ENCODE measurements at regions of chr12 and their contacts with region 1.

Region 1: GRCh38 chr12:52884526-52885293 is 20.2 kb downstream of the KRT8 start:
- DNase-seq: peak; percentile 86
- ATAC-seq: peak; percentile 76

Region 2: GRCh38 chr12:52949413-52950331 is 65.0 kb after region 1 on chr12:
- intact Hi-C with region 1: no loop called
- DNase-seq: no peak
- ATAC-seq: no peak

Region 3: DNA sequence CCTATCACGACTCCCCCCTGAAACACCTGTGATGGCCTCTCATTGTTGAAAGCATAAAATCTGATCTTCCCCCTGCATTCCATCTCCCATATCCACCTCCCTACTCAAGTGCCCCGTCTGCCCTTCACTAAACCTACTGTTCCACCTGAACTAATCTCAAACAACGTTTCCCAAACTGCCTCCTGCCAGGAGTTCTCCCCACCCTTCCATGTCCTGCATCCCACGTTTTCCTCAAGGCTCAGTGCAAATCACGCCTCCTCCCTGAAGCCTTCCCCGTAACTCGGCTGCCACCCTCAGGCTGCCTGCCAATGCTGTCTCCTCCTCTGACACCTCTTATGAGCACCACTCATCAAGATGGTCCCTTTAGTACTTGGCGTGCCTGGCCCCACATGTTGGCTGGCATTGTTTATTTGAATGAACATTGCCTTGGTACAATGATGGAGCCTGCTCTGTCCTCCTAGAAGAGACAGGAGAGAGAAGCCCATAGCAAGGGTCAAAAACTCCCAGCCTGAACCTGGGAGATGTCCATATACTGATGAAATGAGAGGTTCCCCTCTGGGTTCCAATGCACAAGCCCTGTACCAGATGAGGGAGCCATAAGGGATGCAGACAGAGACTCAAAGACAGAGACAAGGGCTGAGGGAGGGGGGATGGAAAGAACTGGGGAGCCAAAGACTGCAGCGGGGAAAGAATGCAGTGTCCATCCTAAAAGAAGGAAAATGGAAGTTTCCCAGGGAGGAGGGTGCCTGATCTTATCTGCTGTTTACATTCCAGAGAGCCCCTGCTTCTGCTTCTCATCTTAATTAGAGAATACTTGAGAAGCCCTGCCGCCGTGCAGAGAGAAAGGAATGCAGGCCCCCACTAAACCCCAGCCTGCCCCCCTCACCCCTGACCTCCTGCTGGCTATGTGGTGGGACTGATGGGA is 91.7 kb after region 1 on chr12:
- intact Hi-C with region 1: loop called (anchors 5 kb)
- DNase-seq: no peak
- ATAC-seq: no peak

Measured in sciatic nerve (tissue), 2 donors.